H1 (cell line): ENCODE measurements at regions of chr19 and their contacts with region 1.

Region 1: DNA sequence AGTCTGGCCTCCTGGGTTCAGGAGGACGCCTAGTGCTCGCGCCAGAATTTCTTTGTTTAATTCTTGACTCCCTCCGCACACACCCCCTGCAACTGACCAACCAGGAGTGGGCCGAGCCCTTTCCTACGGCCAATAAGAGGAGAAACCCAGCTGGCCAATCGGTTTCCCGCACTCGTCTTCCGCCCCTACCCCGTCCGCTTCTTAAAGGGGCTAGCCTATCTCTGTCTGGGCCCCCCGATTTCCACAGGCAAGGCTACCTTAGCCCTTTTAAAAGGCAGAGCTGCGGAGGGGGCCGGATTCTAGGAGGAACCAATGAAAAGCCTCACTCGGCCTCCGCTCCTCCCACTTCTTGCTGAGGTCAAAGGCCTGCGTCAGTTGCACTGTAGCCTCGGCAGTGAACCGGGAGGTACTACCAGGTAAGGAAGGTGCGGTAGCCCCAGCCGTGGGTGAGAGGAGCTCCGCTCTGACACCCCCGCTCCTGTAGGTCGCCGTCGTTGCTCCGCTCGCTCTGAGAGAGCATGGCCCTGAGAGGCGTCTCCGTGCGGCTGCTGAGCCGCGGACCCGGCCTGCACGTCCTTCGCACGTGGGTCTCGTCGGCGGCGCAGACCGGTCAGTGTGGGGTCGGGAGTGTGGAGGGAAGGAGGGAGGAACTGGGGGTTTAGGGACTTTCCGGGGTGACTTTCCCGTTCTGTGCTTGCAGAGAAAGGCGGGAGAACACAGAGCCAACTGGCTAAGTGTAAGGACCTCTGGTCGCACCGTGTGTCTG is at the start of gene GCDH:
- DNase-seq: peak; percentile 95 to 98
- H3K4me3 ChIP-seq: peak within 1 kb of the TSS; percentile 81 to 98 (median 92)
- H3K27ac ChIP-seq: peak within 1 kb of the TSS; percentile 82
- H3K4me1 ChIP-seq: peaks cover 0 to 6% (median 5%) of the 10 kb centered on the region in 4 experiments; a peak in 4 of 7 replicates
- H3K27me3 ChIP-seq: peaks cover 0 to 9% (median 4%) of the 10 kb centered on the region in 4 experiments; a peak in 4 of 7 replicates
- CTCF ChIP-seq: no peak
- EP300 ChIP-seq: no peak
- POLR2A ChIP-seq: peak in 1 of 2 experiments; percentile 77; a peak in 2 of 3 replicates
- RAD21 ChIP-seq: no peak
- total RNA-seq, gene GCDH: 63.8 and 67.3 TPM in 2 replicates

Region 2: GRCh38 chr19:12847159-12848139 is 43.5 kb before region 1 on chr19:
- CTCF ChIA-PET with region 1: interaction called, 10 read pairs
- POLR2A ChIA-PET with region 1: interaction called, 4 read pairs
- DNase-seq: peak in 1 of 2 experiments; percentile 100
- H3K4me3 ChIP-seq: peak overlapping the region in 2 of 4 experiments; percentile 26 to 47; a peak in 4 of 8 replicates
- H3K27ac ChIP-seq: no peak overlapping the region
- H3K4me1 ChIP-seq: peaks cover 0 to 10% (median 3%) of the 10 kb centered on the region in 4 experiments; a peak in 5 of 7 replicates
- H3K27me3 ChIP-seq: no peaks in the 10 kb centered on the region
- CTCF ChIP-seq: peak; percentile 96 to 99 (median 99)
- EP300 ChIP-seq: no peak
- POLR2A ChIP-seq: no peak
- RAD21 ChIP-seq: peak; percentile 92 to 94

Region 3: DNA sequence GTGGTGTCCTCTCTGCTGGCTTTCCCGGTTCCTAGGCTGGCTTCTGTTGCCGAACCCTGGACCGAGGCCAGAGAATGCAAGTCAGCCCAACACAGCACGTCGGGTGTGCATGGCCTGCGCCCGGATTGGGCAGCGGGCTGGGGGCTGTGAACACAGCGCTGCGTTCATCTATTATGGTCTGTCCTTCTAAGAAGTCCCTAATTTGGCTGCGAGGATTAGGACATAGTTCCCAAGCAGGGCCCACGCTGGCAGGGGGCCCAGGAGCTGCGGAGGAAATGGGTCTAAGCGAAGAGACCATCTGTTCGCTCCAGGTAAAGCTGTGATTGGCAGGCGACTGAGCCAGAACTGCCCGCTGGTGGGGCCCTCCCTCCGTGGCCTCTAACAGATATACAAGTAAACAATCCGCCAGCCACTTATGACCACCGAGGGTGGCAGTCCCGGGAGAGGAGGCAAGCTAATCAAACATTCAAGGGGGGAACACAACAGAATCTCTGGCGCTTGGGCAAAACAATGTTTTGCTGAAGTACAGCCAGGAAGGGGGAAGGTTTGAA is 22.1 kb after region 1 on chr19:
- CTCF ChIA-PET with region 1: interaction called, 6 read pairs
- POLR2A ChIA-PET with region 1: interaction called, 180 read pairs
- DNase-seq: peak in 1 of 2 experiments; percentile 70
- H3K4me3 ChIP-seq: peak overlapping the region in 2 of 4 experiments; percentile 32 to 33; a peak in 3 of 8 replicates
- H3K27ac ChIP-seq: peak overlapping the region; percentile 42; the same call in 1 of the 2 replicates
- H3K4me1 ChIP-seq: peaks cover 8 to 20% (median 14%) of the 10 kb centered on the region in 4 experiments
- H3K27me3 ChIP-seq: peaks cover 1 to 3% (median 2%) of the 10 kb centered on the region in 4 experiments
- CTCF ChIP-seq: no peak
- EP300 ChIP-seq: no peak
- POLR2A ChIP-seq: no peak; a peak in 1 of 3 replicates
- RAD21 ChIP-seq: no peak

Region 4: GRCh38 chr19:12918271-12918670 is 27.3 kb after region 1 on chr19:
- CTCF ChIA-PET with region 1: interaction called, 6 read pairs
- POLR2A ChIA-PET with region 1: interaction called, 180 read pairs
- DNase-seq: no peak
- H3K4me3 ChIP-seq: no peak overlapping the region
- H3K27ac ChIP-seq: no peak overlapping the region
- H3K4me1 ChIP-seq: peaks cover 5 to 9% (median 7%) of the 10 kb centered on the region in 4 experiments; a peak in 6 of 7 replicates
- H3K27me3 ChIP-seq: peaks cover 6 to 12% (median 11%) of the 10 kb centered on the region in 4 experiments
- CTCF ChIP-seq: no peak
- EP300 ChIP-seq: no peak
- POLR2A ChIP-seq: no peak
- RAD21 ChIP-seq: no peak

Region 5: GRCh38 chr19:12938234-12939025 is 47.5 kb after region 1 on chr19 and contains the start of gene CALR:
- CTCF ChIA-PET with region 1: interaction called, 3 read pairs
- POLR2A ChIA-PET with region 1: interaction called, 24 read pairs
- DNase-seq: peak; percentile 91 to 98
- H3K4me3 ChIP-seq: peak within 1 kb of the TSS; percentile 68 to 97 (median 93)
- H3K27ac ChIP-seq: peak within 1 kb of the TSS; percentile 32; the same call in 1 of the 2 replicates
- H3K4me1 ChIP-seq: peaks cover 0 to 23% (median 13%) of the 10 kb centered on the region in 4 experiments; a peak in 6 of 7 replicates
- H3K27me3 ChIP-seq: no peaks in the 10 kb centered on the region
- CTCF ChIP-seq: no peak
- EP300 ChIP-seq: no peak
- POLR2A ChIP-seq: peak; percentile 98 to 99
- RAD21 ChIP-seq: no peak
- total RNA-seq, gene CALR: 1,155 and 1,177 TPM in 2 replicates

Region 6: DNA sequence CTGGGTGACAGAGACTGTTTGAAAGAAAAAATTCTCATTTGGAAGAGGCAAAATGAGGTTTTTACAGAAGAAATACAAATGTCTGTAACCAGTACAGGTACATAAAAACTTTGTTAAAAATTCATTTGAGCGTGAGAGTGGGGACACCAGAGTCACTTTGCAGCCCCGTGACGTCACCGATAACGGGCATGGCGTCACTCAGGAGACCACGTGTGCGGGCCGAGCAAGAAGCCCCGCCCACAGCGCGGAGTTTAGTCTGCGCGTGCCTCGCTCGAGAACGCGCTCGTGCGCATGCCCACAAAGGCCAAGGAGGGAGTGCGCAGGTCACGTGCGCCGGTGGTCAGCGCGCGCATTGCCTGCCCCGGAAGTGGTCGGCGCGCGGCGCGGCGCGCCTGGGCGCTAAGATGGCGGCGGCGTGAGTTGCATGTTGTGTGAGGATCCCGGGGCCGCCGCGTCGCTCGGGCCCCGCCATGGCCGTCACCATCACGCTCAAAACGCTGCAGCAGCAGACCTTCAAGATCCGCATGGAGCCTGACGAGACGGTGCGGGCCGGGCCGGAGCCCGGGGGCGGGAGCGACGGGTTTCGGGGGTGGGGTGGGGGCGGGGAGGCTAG is 54.6 kb after region 1 on chr19 and contains the start of gene RAD23A:
- CTCF ChIA-PET with region 1: no interaction called
- POLR2A ChIA-PET with region 1: interaction called, 18 read pairs
- DNase-seq: peak; percentile 96 to 99
- H3K4me3 ChIP-seq: peak within 1 kb of the TSS; percentile 77 to 93 (median 90)
- H3K27ac ChIP-seq: peak within 1 kb of the TSS; percentile 96
- H3K4me1 ChIP-seq: peaks cover 0 to 3% (median under 1%) of the 10 kb centered on the region in 4 experiments; a peak in 1 of 7 replicates
- H3K27me3 ChIP-seq: no peaks in the 10 kb centered on the region
- CTCF ChIP-seq: peak in 1 of 3 experiments; percentile 2; a peak in 1 of 4 replicates
- EP300 ChIP-seq: no peak
- POLR2A ChIP-seq: peak; percentile 98
- RAD21 ChIP-seq: no peak
- total RNA-seq, gene RAD23A: 73.3 and 76.1 TPM in 2 replicates

Region 7: GRCh38 chr19:12956446-12957388 is 65.7 kb after region 1 on chr19 and contains the start of gene GADD45GIP1:
- CTCF ChIA-PET with region 1: no interaction called
- POLR2A ChIA-PET with region 1: interaction called, 39 read pairs
- DNase-seq: peak; percentile 38 to 89
- H3K4me3 ChIP-seq: peak within 1 kb of the TSS; percentile 82 to 91 (median 88)
- H3K27ac ChIP-seq: peak within 1 kb of the TSS; percentile 94
- H3K4me1 ChIP-seq: peaks cover 0 to 4% (median 2%) of the 10 kb centered on the region in 4 experiments; a peak in 3 of 7 replicates
- H3K27me3 ChIP-seq: no peaks in the 10 kb centered on the region
- CTCF ChIP-seq: no peak
- EP300 ChIP-seq: no peak
- POLR2A ChIP-seq: peak; percentile 96 to 97
- RAD21 ChIP-seq: no peak
- total RNA-seq, gene GADD45GIP1: 42.2 and 45.5 TPM in 2 replicates